CD4-positive, alpha-beta memory T cell (primary cell): ENCODE measurements at regions of chr1 and their contacts with region 1.

Region 1: DNA sequence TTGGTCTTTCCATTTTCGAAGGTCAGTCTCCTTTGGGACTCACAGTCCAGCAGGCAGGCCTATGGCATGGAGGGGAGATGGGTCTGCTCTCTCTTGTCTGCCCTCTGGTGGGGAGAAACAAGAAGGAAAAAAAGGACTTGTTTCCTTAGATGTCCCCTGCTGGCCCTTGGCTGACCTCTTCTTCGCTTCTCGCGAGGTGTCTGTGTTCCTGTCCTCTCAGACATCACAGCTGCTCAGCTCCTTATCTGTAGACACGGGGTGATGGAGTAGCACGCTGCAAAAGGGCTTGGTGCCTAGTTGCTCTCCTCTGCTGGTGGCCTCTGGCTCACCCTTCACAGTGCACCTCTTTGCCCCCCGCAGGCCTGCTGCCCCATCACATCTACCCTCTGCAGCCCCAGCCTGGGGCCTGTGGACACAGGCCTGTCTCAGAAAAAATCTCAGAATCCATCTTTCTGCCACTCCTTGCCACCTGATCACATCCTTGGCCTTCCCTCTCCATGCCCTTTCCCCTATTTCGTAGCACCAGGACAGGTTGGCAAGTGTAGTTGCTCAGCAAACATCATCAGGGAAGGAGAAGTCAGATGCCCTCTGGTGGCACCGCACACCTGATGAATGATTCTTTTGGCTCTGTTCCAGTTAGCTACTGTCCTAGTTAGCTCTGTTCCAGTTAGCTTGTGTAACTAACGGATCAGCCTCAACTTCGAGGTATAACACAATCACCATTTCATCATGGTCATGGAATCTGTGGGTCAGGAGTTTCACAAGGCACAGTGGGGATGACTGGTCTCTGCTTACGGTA is 18.7 kb upstream of the AK2 start:
- DNase-seq: peak; percentile 30 to 45 (median 32)
- H3K4me3 ChIP-seq: no peak overlapping the region
- H3K4me3 Mint-ChIP-seq: no peak overlapping the region
- H3K27ac ChIP-seq: no peak overlapping the region
- H3K27ac Mint-ChIP-seq: peak overlapping the region in 2 of 7 donors; percentile 31 to 83
- H3K4me1 ChIP-seq: no peaks in the 10 kb centered on the region
- H3K4me1 Mint-ChIP-seq: peaks cover 0 to 9% (median 4%) of the 10 kb centered on the region in 4 donors
- H3K27me3 ChIP-seq: no peaks in the 10 kb centered on the region
- H3K27me3 Mint-ChIP-seq: no peaks in the 10 kb centered on the region

Region 2: DNA sequence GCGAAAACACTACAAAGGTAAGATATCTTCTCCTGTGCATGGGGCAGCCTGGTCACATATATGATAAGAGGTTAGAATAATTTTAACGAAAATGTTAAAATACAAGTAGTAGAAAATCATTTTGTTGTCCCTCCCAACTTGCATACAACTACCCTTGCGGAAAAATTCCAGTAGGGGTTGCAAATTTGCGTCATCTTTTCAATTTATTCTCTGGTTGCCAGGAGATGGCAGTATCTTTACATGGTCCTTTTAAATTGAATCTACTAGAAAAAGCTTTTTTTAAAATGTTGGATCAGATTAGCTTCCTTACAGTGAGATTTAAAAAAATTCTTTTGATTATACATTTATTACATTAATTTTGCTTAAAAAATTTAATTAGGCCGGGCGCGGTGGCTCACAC is 227.1 kb before region 1 on chr1:
- CTCF ChIA-PET with region 1: no interaction called
- POLR2A ChIA-PET with region 1: no interaction called
- intact Hi-C with region 1: no loop called
- DNase-seq: no peak
- H3K4me3 ChIP-seq: no peak overlapping the region
- H3K4me3 Mint-ChIP-seq: no peak overlapping the region
- H3K27ac ChIP-seq: no peak overlapping the region
- H3K27ac Mint-ChIP-seq: no peak overlapping the region
- H3K4me1 ChIP-seq: no peaks in the 10 kb centered on the region
- H3K4me1 Mint-ChIP-seq: peaks cover 8 to 24% (median 11%) of the 10 kb centered on the region in 4 donors
- H3K27me3 ChIP-seq: no peaks in the 10 kb centered on the region
- H3K27me3 Mint-ChIP-seq: no peaks in the 10 kb centered on the region

Region 3: GRCh38 chr1:32925403-32926162 is 129.8 kb before region 1 on chr1:
- CTCF ChIA-PET with region 1: interaction called, 112 read pairs
- POLR2A ChIA-PET with region 1: no interaction called
- intact Hi-C with region 1: loop called (anchors 2 kb)
- DNase-seq: peak in 4 of 5 donors; percentile 14 to 27 (median 20)
- H3K4me3 ChIP-seq: no peak overlapping the region
- H3K4me3 Mint-ChIP-seq: peak overlapping the region; percentile 1 to 82 (median 47)
- H3K27ac ChIP-seq: no peak overlapping the region
- H3K27ac Mint-ChIP-seq: peak overlapping the region in 1 of 7 donors; percentile 64
- H3K4me1 ChIP-seq: peaks cover 17% of the 10 kb centered on the region
- H3K4me1 Mint-ChIP-seq: peaks cover 14 to 24% (median 17%) of the 10 kb centered on the region in 4 donors
- H3K27me3 ChIP-seq: peaks cover 23% of the 10 kb centered on the region
- H3K27me3 Mint-ChIP-seq: peaks cover 42 to 52% of the 10 kb centered on the region in 2 donors

Region 4: DNA sequence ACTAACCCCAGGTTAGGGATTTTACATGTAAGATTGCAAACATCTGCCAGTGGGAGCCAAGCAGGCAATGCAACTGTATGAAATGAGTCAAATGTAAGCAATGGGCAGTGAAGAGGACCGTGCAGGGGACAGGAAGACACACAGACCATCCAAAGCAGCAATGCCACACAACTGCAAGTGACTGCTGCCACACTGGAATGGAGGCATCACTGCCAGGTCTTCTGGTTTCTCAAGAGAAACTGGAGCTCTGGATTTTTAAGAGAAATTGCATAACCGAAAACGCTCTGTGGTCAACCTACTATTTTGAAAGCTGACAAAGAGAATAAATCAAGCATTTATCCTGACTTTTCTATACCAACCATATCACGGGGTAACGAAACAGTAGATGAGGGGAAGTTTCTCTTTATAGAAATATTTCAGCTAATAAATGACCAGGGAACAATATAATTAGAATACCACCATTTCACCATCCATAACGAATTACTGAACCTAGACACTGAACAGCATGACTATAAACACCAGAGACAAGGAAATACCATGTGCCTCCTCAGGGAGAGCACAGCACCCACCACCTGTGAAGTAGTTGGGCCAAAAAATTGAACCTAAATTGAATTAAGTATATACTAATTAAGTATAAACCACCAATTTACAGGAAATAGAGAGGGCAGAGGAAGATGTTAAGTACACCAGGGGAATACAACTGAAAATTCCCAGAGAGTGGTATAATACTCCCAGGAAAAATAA is 23.1 kb before region 1 on chr1:
- CTCF ChIA-PET with region 1: no interaction called
- POLR2A ChIA-PET with region 1: no interaction called
- intact Hi-C with region 1: no loop called
- DNase-seq: no peak
- H3K4me3 ChIP-seq: no peak overlapping the region
- H3K4me3 Mint-ChIP-seq: peak overlapping the region in 4 of 8 donors; percentile 4 to 28 (median 17)
- H3K27ac ChIP-seq: no peak overlapping the region
- H3K27ac Mint-ChIP-seq: no peak overlapping the region
- H3K4me1 ChIP-seq: peaks cover 34% of the 10 kb centered on the region
- H3K4me1 Mint-ChIP-seq: peaks cover 36 to 85% (median 65%) of the 10 kb centered on the region in 4 donors
- H3K27me3 ChIP-seq: no peaks in the 10 kb centered on the region
- H3K27me3 Mint-ChIP-seq: no peaks in the 10 kb centered on the region

Region 5: GRCh38 chr1:33045246-33045645 is 10.2 kb before region 1 on chr1:
- CTCF ChIA-PET with region 1: interaction called, 14 read pairs
- POLR2A ChIA-PET with region 1: no interaction called
- intact Hi-C with region 1: no loop called
- DNase-seq: no peak
- H3K4me3 ChIP-seq: no peak overlapping the region
- H3K4me3 Mint-ChIP-seq: no peak overlapping the region
- H3K27ac ChIP-seq: no peak overlapping the region
- H3K27ac Mint-ChIP-seq: peak overlapping the region in 5 of 7 donors; percentile 29 to 84 (median 70)
- H3K4me1 ChIP-seq: peaks cover 9% of the 10 kb centered on the region
- H3K4me1 Mint-ChIP-seq: peaks cover 5 to 14% (median 11%) of the 10 kb centered on the region in 4 donors
- H3K27me3 ChIP-seq: no peaks in the 10 kb centered on the region
- H3K27me3 Mint-ChIP-seq: peaks cover 0 to 1% of the 10 kb centered on the region in 2 donors